ENCODE measurements at regions of chr1 and their contacts with region 1.

Region 1: DNA sequence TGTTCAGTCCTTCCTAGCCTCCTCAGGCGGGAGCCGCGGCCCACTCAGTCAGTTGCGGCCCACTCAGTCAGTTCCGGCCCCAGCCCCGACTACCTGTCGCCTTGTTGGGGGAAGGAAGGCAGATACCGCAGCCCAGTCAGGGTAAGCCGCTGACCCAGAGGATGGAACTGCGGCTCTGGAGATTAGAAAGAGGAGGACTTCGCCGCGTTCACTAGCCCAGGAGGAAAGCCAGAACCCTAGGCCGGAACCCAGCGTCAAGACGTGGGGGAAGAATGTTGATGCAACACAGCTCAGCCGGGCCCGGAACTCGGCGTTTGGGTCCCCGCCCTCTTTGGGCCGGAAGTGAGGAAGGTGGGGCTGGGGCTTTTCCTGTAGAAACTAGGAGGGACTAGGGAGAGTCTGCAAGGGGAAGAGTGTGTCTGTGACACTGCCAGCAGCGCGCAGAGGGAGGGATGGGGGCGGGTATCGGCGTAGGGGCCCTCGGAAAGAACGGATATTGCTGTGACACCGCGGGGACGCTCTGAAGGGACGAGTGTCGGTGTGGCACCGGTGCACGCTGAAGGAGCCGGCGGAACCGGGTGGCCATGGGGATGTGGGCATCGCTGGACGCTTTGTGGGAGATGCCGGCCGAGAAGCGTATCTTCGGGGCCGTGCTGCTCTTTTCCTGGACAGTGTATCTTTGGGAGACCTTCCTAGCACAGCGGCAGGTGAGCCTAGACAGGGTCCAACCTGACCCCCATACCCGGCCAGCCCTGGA is at the start of gene ZMPSTE24:
- DNase-seq: peak; percentile 89
- ATAC-seq: peak; percentile 95
- H3K4me3 Mint-ChIP-seq: peak within 1 kb of the TSS; percentile 96
- H3K27ac Mint-ChIP-seq: peak within 1 kb of the TSS; percentile 99
- H3K4me1 Mint-ChIP-seq: peaks cover 38% of the 10 kb centered on the region
- H3K27me3 Mint-ChIP-seq: no peaks in the 10 kb centered on the region
- CTCF ChIP-seq: no peak
- total RNA-seq, gene ZMPSTE24: 17.6 and 18.6 TPM in 2 replicates

Region 2: DNA sequence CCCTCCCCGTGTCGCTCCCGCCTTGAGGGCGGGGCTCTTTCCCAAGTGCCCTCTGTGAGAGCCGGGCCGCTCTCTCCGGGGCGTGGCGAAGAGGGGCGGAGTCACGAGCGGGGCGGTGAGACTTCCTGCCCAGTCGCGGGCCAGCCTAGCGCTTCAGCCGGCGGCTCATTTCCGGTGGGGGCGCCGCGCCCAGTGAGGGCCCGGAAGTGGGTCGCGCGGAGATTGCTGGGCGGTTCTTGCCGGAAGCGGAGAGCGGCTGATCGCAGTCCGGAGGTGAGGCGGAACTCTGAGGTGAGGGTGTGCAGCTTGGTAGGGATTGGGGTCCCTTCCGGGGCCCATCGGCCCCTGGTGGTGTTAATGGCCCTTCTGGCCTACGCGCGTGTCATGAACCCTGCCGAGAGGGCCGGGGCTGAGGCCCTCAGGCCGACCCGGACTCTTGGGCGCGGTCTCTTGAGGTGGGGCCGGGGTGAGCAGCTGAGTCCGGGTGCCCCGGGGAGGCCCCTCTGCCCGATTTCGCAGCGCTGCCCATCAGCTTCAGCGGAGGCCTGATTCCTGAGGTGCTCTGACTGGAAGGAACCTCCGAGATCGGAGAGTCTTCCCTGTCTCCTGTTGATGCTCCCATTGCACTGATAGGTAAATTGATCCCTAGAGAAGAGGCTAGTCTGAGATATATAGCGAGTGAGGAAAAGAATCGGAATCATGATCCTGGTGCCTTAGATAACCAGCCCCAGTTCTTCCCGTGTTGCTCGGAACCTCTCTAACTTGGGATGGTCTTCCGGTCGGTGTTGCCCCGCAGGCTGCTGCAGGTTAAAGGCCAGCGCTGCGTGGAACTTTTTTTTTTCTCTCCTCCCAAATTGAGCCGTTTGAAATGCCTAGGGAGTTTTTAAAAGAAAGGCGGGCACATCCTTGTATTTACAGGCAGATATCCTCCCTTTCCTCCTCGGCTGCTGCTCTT is 217.1 kb before region 1 on chr1 and contains the start of gene CAP1:
- CTCF ChIA-PET with region 1: no interaction called
- POLR2A ChIA-PET with region 1: interaction called, 4 read pairs
- intact Hi-C with region 1: loop called (anchors 1 kb)
- DNase-seq: peak; percentile 100
- ATAC-seq: peak; percentile 85
- H3K4me3 Mint-ChIP-seq: peak within 1 kb of the TSS; percentile 98
- H3K27ac Mint-ChIP-seq: peak within 1 kb of the TSS; percentile 94
- H3K4me1 Mint-ChIP-seq: peaks cover 78% of the 10 kb centered on the region
- H3K27me3 Mint-ChIP-seq: no peaks in the 10 kb centered on the region
- CTCF ChIP-seq: no peak
- total RNA-seq, gene CAP1: 410 and 411 TPM in 2 replicates

Region 3: GRCh38 chr1:40153073-40153770 is 104.6 kb before region 1 on chr1:
- CTCF ChIA-PET with region 1: no interaction called
- POLR2A ChIA-PET with region 1: interaction called, 15 read pairs
- intact Hi-C with region 1: loop called (anchors 1 kb)
- DNase-seq: no peak
- ATAC-seq: peak; percentile 77
- H3K4me3 Mint-ChIP-seq: peak overlapping the region; percentile 74
- H3K27ac Mint-ChIP-seq: peak overlapping the region; percentile 90
- H3K4me1 Mint-ChIP-seq: peaks cover 27% of the 10 kb centered on the region
- H3K27me3 Mint-ChIP-seq: no peaks in the 10 kb centered on the region
- CTCF ChIP-seq: no peak

Region 4: DNA sequence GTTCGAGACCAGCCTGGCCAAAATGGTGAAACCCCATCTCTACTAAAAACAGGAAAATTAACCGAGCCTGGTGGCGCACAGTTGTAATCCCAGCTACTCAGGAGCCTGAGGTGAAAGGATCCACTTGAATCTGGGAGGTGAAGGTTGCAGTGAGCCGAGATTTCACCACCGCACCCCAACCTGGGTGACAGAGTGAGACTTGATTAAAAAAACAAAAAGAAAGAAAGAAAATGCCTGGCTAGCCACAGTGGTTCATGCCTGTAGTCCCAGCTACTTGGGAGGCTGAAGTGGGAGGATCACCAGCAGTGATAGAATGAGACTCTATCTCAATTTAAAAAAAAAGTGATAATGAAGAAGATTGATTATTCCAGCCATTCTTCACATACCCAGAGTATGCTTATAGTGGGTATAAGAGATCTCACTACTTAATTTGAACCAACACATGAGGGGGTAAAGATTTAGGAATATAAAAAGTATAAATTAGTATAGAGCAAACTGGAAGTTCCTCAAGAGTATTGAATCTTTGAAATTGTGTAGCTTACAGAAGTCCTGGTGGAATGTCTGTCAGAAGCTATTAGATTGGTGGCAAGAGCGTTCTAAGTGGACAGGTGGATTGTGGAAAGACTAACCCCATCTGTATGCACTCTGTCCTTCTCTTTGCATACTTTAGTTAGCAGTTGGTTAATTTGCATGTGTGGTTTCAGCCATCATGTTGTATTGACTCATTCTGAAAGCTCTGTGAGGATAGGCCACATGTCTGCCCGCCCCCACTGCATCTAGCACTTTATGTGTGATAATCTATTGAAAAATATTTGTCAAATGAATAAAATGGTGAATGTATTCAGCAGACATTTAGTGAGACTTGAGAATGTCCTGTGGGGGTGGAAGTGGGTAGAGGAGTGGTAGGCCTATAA is 71.7 kb before region 1 on chr1:
- CTCF ChIA-PET with region 1: no interaction called
- POLR2A ChIA-PET with region 1: interaction called, 7 read pairs
- intact Hi-C with region 1: loop called (anchors 1 kb)
- DNase-seq: peak; percentile 26
- ATAC-seq: peak; percentile 98
- H3K4me3 Mint-ChIP-seq: peak overlapping the region; percentile 59
- H3K27ac Mint-ChIP-seq: peak overlapping the region; percentile 62
- H3K4me1 Mint-ChIP-seq: peaks cover 50% of the 10 kb centered on the region
- H3K27me3 Mint-ChIP-seq: no peaks in the 10 kb centered on the region
- CTCF ChIP-seq: no peak

Region 5: GRCh38 chr1:40241362-40241761 is 16.5 kb before region 1 on chr1:
- CTCF ChIA-PET with region 1: no interaction called
- POLR2A ChIA-PET with region 1: interaction called, 11 read pairs
- intact Hi-C with region 1: loop called (anchors 1 kb)
- DNase-seq: no peak
- ATAC-seq: peak; percentile 32
- H3K4me3 Mint-ChIP-seq: no peak overlapping the region
- H3K27ac Mint-ChIP-seq: peak overlapping the region; percentile 76
- H3K4me1 Mint-ChIP-seq: peaks cover 11% of the 10 kb centered on the region
- H3K27me3 Mint-ChIP-seq: no peaks in the 10 kb centered on the region
- CTCF ChIP-seq: no peak

Region 6: DNA sequence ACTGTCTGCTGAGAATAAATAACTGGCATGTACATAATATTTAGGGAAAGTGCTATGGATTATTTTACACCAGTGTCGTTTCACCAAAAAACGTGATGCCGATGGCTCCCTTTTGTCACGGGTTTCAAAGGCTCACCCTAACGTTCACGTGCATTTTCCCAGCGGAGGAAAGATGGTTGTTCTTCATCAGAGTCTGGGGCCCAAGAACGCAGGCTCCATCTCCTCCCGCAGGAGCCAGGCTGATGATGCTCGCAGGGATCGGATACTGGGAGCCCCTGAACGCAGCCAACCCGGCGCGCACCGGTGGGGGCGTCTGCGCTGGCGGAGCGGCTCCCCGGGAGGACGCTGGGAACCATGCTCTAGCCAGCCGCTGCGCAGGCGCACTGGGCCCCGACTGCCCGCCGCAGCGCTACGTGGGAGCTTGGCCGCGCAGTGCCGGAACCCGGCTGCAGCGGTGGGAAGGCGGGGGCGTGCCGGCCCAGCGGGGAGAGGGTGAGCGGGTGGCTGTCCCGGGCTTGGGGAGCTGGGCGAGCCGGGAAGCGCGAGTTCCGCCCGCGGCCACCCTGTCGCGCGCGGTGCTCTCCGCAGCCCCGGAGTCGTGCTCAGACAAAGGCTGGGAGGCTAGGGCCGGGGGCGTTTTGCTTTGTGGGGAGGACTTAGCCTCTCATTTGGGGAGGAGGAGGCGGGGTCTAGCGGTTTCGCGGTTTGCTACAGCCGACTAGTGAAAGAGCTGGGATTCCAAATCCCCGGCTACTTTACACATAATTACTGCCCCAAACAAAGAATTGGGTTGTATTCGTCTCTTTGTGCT is 192.0 kb after region 1 on chr1 and contains the start of gene ZFP69B:
- CTCF ChIA-PET with region 1: no interaction called
- POLR2A ChIA-PET with region 1: interaction called, 4 read pairs
- intact Hi-C with region 1: loop called (anchors 1 kb)
- DNase-seq: peak; percentile 97
- ATAC-seq: peak; percentile 80
- H3K4me3 Mint-ChIP-seq: peak within 1 kb of the TSS; percentile 86
- H3K27ac Mint-ChIP-seq: peak within 1 kb of the TSS; percentile 90
- H3K4me1 Mint-ChIP-seq: peaks cover 30% of the 10 kb centered on the region
- H3K27me3 Mint-ChIP-seq: no peaks in the 10 kb centered on the region
- CTCF ChIP-seq: no peak
- total RNA-seq, gene ZFP69B: 8.9 and 10.4 TPM in 2 replicates

Region 7: GRCh38 chr1:40709100-40709801 is 451.4 kb after region 1 on chr1:
- CTCF ChIA-PET with region 1: no interaction called
- POLR2A ChIA-PET with region 1: interaction called, 12 read pairs
- intact Hi-C with region 1: no loop called
- DNase-seq: peak; percentile 30
- ATAC-seq: peak; percentile 89
- H3K4me3 Mint-ChIP-seq: peak overlapping the region; percentile 95
- H3K27ac Mint-ChIP-seq: peak overlapping the region; percentile 95
- H3K4me1 Mint-ChIP-seq: peaks cover 75% of the 10 kb centered on the region
- H3K27me3 Mint-ChIP-seq: no peaks in the 10 kb centered on the region
- CTCF ChIP-seq: no peak

Region 8: GRCh38 chr1:41135196-41135947 is 877.5 kb after region 1 on chr1:
- CTCF ChIA-PET with region 1: no interaction called
- POLR2A ChIA-PET with region 1: no interaction called
- intact Hi-C with region 1: no loop called
- DNase-seq: no peak
- ATAC-seq: no peak
- H3K4me3 Mint-ChIP-seq: no peak overlapping the region
- H3K27ac Mint-ChIP-seq: no peak overlapping the region
- H3K4me1 Mint-ChIP-seq: peaks cover 14% of the 10 kb centered on the region
- H3K27me3 Mint-ChIP-seq: no peaks in the 10 kb centered on the region
- CTCF ChIP-seq: no peak

Measured in activated B cell treated with CpG ODN at 0.5 μM for 24 hours (primary cell).